ENCODE measurements at regions of chr19 and their contacts with region 1.

Region 1: GRCh38 chr19:9945319-9945966 is 9.1 kb upstream of the OLFM2 start:
- DNase-seq: peak in 4 of 6 donors; percentile 29 to 46 (median 40)
- ATAC-seq: peak in 3 of 4 donors; percentile 72 to 83 (median 74)
- H3K4me3 ChIP-seq: no peak overlapping the region
- H3K27ac ChIP-seq: no peak overlapping the region
- H3K4me1 ChIP-seq: no peaks in the 10 kb centered on the region
- H3K27me3 ChIP-seq: no peaks in the 10 kb centered on the region
- CTCF ChIP-seq: no peak

Region 2: DNA sequence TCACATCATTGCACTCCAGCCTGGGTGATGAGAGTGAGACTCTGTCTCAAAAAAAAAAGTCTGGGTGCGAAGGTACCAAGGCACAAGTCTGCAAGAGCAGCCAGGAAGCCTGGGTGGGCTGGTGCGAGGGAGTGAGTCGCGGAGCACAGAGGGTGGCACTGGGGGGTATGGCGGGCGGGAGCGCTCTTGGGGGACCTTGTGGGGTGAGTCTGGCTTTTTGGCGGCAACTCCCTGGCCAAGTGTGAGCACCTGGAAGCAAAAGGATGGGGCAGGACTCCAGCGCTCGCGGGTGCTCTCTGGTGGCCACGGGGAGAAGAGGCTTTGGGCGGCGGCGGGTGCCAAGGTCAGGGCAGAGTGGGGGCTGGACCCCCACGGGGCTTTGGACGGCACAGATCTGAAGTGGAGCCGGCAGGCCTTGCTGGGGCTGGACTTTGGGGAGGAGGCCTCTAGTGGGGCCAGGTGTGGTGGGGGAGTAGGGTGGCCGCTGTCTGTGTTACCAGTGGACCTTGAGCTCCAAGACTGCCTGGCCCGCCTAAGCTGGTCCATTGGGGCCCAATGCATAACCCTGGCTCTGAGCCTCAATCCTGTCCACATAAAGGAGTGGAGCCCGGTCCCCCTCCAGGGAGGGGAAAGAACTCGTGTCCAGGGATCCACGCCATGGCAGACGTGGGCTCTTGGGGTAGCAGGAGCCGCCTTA is 167.6 kb after region 1 on chr19:
- intact Hi-C with region 1: loop called in 1 of 3 experiments (anchors 10 kb)
- DNase-seq: peak in 5 of 6 donors; percentile 59 to 89 (median 75)
- ATAC-seq: peak; percentile 64 to 79 (median 75)
- H3K4me3 ChIP-seq: peak overlapping the region in 1 of 4 donors; percentile 10
- H3K27ac ChIP-seq: no peak overlapping the region
- H3K4me1 ChIP-seq: peaks cover 0 to 5% (median 0%) of the 10 kb centered on the region in 3 donors
- H3K27me3 ChIP-seq: no peaks in the 10 kb centered on the region
- CTCF ChIP-seq: peak; percentile 29 to 53 (median 38)